Activated CD4-positive, alpha-beta memory T cell treated with anti-CD3 and anti-CD28 coated beads for 36 hours (primary cell): ENCODE measurements at regions of chr17 and their contacts with region 1.

Region 1: DNA sequence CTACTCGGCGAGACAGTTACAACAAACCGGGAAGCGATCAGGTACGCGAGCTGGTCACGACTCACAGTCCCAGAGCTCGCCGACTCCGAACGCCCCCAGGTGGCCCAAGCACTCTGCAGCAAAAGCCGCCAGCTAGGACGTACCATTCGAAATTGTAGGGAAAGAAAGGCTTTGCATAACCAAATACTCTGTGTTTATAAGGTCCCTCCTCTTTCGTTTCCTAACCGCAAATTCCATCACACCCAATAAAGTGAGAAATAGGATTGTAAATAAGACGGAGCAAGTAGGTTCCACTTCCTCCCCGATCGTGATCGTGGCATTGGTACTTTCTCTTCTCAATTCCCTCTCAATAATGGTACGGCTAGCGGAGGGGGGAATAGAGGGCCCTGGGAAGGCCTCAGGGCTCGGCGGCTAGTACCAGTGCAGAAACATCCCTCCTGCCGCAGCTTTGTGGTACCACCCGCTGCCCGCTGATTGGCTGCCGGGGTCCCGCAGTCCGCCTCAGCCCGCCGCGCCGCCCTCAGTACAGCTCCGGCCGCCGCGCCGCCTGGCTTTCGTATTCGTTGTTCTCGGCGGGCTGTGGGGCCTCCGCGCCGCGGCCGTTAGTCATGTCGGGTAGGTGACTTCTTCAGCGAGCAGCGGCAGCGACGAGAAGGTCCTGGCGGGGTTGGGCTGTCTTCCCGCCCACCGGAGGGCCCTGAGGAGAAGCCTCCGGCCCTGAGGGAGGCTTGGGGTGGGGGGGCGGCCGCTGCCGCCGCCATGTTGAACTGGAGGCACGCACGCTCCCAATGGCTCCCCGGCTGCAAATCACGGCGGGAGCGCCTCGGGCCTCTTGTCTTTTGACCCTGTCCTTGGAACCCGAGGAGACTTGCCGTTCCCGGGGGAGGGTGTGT is at the start of gene TAF15:
- DNase-seq: peak; percentile 97
- H3K4me3 Mint-ChIP-seq: peak within 1 kb of the TSS; percentile 81
- H3K27ac Mint-ChIP-seq: peak within 1 kb of the TSS; percentile 99
- H3K4me1 Mint-ChIP-seq: peaks cover 46% of the 10 kb centered on the region
- H3K27me3 Mint-ChIP-seq: no peaks in the 10 kb centered on the region
- total RNA-seq, gene TAF15: 269 to 271 TPM

Region 2: DNA sequence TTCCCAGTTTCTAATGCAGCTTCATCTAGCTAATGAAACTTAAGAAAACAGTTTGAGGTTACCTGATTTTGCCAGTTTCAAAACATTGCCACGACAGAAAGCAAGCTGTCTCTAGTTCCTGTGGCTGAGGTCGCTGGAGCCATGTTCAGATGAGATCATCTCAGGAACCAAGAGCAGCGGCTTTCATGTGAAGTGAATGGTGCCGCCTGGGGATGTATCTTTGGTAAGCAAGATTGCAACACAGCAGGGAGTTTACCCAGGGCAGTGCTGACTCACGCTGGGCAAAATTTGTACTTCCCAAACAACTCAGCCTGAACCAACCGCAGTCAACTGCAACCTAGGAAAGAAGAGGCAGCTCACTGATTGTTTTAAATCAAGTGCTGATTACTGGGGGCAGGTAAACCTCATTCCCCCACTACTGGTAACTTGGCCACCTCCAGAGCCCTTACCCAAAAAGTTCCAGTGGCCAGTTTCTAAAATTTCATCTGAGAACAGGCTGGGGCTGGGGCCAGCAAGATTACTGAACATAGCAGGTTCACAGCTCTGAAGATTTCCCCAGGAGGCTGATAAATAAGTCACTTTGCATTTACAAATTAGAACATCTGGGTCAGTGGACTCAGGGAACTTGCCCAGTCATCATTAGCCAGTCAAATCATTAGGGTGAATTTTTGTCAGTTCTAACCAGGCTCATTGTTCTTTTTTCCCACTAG is 745.5 kb before region 1 on chr17 and contains the start of gene RFFL:
- CTCF ChIA-PET with region 1: no interaction called
- POLR2A ChIA-PET with region 1: no interaction called
- intact Hi-C with region 1: loop called (anchors 5 kb)
- DNase-seq: peak; percentile 95
- H3K4me3 Mint-ChIP-seq: peak within 1 kb of the TSS; percentile 35
- H3K27ac Mint-ChIP-seq: peak within 1 kb of the TSS; percentile 76
- H3K4me1 Mint-ChIP-seq: peaks cover 65% of the 10 kb centered on the region
- H3K27me3 Mint-ChIP-seq: no peaks in the 10 kb centered on the region
- total RNA-seq, gene RFFL: 30.5 to 32.8 TPM

Region 3: DNA sequence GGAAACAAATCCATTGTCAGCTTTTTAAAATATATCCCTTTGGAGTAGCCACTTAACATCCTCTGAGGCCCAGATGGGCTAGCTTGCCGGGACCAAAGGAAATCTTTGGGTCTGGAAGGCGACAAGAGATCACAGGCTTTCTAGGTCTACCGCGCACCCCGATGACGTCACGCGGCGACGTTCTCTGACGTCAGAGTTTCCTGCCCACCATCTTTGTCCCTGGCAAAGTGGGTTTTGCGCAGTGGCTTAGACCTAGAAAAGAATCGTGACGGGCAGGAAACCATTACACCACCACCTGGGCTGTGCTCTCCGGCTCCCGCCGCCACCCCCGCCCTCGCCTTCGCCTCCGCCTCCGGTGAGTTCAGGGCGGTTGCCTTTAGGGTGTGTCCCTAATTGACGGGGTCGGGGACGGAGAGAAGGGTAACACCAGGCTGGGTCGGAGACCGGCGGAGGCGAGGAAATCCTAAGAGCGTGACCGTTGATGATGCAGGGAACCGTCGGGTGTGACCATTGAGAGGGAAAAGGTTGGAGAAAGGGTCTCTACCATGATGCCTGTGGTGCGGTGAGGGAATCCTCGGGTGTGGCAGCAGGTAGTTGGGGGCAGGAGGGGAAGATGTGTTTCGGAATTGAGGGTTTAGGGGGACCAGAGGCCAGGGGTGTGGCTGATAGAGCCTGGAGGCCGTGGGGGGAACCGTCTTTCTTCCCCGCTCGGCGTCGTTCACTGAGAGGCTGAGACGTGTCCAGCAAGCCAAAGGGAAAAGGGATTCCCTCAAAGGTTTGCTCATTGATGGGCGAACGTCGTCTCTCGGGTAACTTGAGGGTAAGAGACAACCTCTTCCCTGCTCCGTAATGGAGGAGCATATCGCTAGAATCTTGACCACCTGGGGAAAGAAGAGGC is 221.9 kb before region 1 on chr17 and contains the start of gene AP2B1:
- CTCF ChIA-PET with region 1: no interaction called
- POLR2A ChIA-PET with region 1: interaction called, 7 read pairs
- intact Hi-C with region 1: loop called (anchors 2 kb)
- DNase-seq: peak; percentile 98
- H3K4me3 Mint-ChIP-seq: peak within 1 kb of the TSS; percentile 93
- H3K27ac Mint-ChIP-seq: peak within 1 kb of the TSS; percentile 97
- H3K4me1 Mint-ChIP-seq: peaks cover 23% of the 10 kb centered on the region
- H3K27me3 Mint-ChIP-seq: no peaks in the 10 kb centered on the region
- total RNA-seq, gene AP2B1: 187 to 192 TPM

Region 4: DNA sequence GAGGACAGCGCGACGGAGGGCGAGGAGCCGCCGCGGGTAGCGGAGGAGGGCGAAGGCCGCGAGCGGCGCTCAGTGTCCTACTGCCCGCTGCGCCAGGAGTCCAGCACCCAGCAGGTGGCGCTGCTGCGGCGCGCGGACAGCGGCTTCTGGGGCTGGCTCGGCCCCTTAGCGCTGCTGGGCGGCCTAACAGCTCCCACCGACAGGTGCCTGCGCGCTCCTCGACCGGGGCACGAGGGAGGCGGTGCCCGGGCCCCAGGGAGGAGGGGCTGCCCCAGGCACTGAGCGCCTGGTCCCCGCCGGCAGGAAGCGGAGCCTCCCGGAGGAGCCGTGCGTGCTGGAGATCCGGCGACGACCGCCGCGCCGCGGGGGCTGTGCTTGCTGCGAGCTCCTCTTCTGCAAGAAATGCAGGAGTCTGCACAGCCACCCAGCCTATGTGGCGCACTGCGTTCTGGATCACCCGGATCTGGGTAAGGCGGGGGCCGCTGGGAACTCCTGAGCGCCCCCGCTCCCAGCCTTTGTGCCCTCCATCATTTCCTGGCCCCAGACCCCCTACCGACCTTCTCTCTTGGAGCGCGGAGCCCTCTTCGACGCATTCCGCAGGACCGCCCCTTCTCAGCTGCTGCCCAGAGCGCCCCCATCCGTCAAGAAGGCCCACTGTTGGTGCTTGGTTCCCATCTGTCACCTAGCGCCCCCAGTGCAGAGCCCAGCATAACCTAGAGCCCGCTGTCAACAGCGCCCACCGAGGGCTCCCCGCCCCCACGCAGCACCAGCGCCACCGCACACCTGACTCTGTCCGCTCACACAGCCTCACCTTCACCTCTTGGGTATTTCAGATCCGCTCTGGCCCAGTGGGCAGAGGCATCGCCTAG is 44.9 kb before region 1 on chr17:
- CTCF ChIA-PET with region 1: interaction called, 336 read pairs
- POLR2A ChIA-PET with region 1: interaction called, 30 read pairs
- intact Hi-C with region 1: loop called (anchors 1 kb)
- DNase-seq: peak; percentile 91
- H3K4me3 Mint-ChIP-seq: peak overlapping the region; percentile 81
- H3K27ac Mint-ChIP-seq: peak overlapping the region; percentile 46
- H3K4me1 Mint-ChIP-seq: peaks cover 9% of the 10 kb centered on the region
- H3K27me3 Mint-ChIP-seq: no peaks in the 10 kb centered on the region

Region 5: GRCh38 chr17:35819456-35819855 is 10.2 kb after region 1 on chr17:
- CTCF ChIA-PET with region 1: interaction called, 13 read pairs
- POLR2A ChIA-PET with region 1: interaction called, 5 read pairs
- intact Hi-C with region 1: no loop called
- DNase-seq: no peak
- H3K4me3 Mint-ChIP-seq: no peak overlapping the region
- H3K27ac Mint-ChIP-seq: no peak overlapping the region
- H3K4me1 Mint-ChIP-seq: peaks cover 32% of the 10 kb centered on the region
- H3K27me3 Mint-ChIP-seq: no peaks in the 10 kb centered on the region

Region 6: DNA sequence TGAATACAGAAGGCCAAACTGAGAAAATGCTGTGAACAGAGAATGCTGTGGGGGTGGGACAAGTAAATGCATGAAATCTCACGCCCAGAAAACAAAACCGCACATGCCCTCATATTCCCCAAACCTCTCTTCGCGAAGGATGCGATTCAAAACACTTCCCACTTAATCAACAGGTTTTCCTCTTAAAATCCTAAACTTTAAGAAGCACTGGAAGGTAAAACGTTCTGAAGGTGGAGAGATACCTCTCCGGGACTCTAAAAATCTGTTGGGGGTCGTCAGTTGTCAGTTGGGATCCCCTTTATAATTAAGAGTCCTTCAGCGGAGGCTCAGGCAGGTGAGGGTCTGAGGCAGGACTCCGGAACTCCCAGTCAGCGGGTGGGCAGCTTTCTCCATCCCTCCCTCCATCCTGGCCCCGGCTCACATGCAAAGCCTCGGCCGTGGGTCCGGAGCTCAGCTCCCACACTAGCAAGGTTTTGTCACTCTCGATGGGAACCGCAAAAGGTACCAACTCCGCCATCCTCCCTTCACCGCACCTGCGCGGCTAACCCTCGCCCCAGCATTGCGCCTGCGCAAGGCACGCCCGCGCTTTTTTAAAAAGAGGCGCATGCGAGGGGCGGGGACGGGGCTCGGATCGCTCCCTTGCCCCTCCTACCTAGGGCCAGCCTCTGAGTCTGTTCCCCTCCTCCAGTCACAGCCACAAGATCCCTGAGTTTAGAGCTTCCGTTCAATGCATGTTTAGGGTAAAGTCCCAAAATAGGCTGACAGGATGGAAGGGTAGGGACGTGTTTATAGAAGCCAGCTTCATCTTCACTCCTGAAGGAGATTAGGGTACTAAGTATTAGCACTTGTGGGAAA is 121.2 kb after region 1 on chr17 and contains the start of gene RDM1:
- CTCF ChIA-PET with region 1: no interaction called
- POLR2A ChIA-PET with region 1: interaction called, 10 read pairs
- intact Hi-C with region 1: no loop called
- DNase-seq: peak; percentile 94
- H3K4me3 Mint-ChIP-seq: peak within 1 kb of the TSS; percentile 79
- H3K27ac Mint-ChIP-seq: peak within 1 kb of the TSS; percentile 62
- H3K4me1 Mint-ChIP-seq: peaks cover 23% of the 10 kb centered on the region
- H3K27me3 Mint-ChIP-seq: peaks cover 2% of the 10 kb centered on the region
- total RNA-seq, gene RDM1: 10.4 to 10.6 TPM